ENCODE measurements at regions of chr17 and their contacts with region 1.

Region 1: GRCh38 chr17:32529604-32530003 is 42.8 kb downstream of the CDK5R1 start:
- DNase-seq: no peak
- ATAC-seq: no peak
- H3K4me3 ChIP-seq: no peak overlapping the region
- H3K4me3 Mint-ChIP-seq: no peak overlapping the region
- H3K27ac ChIP-seq: no peak overlapping the region
- H3K27ac Mint-ChIP-seq: no peak overlapping the region
- H3K4me1 ChIP-seq: peaks cover 16 to 31% of the 10 kb centered on the region in 2 donors
- H3K4me1 Mint-ChIP-seq: peaks cover 34% of the 10 kb centered on the region
- H3K27me3 ChIP-seq: no peaks in the 10 kb centered on the region
- H3K27me3 Mint-ChIP-seq: no peaks in the 10 kb centered on the region
- CTCF ChIP-seq: no peak

Region 2: GRCh38 chr17:32546031-32546444 is 16.4 kb after region 1 on chr17:
- CTCF ChIA-PET with region 1: no interaction called
- POLR2A ChIA-PET with region 1: no interaction called
- intact Hi-C with region 1: no loop called
- DNase-seq: no peak
- ATAC-seq: no peak
- H3K4me3 ChIP-seq: no peak overlapping the region
- H3K4me3 Mint-ChIP-seq: no peak overlapping the region
- H3K27ac ChIP-seq: no peak overlapping the region
- H3K27ac Mint-ChIP-seq: no peak overlapping the region
- H3K4me1 ChIP-seq: peaks cover 2% of the 10 kb centered on the region in 2 donors
- H3K4me1 Mint-ChIP-seq: peaks cover 2% of the 10 kb centered on the region
- H3K27me3 ChIP-seq: no peaks in the 10 kb centered on the region
- H3K27me3 Mint-ChIP-seq: no peaks in the 10 kb centered on the region
- CTCF ChIP-seq: no peak

Region 3: DNA sequence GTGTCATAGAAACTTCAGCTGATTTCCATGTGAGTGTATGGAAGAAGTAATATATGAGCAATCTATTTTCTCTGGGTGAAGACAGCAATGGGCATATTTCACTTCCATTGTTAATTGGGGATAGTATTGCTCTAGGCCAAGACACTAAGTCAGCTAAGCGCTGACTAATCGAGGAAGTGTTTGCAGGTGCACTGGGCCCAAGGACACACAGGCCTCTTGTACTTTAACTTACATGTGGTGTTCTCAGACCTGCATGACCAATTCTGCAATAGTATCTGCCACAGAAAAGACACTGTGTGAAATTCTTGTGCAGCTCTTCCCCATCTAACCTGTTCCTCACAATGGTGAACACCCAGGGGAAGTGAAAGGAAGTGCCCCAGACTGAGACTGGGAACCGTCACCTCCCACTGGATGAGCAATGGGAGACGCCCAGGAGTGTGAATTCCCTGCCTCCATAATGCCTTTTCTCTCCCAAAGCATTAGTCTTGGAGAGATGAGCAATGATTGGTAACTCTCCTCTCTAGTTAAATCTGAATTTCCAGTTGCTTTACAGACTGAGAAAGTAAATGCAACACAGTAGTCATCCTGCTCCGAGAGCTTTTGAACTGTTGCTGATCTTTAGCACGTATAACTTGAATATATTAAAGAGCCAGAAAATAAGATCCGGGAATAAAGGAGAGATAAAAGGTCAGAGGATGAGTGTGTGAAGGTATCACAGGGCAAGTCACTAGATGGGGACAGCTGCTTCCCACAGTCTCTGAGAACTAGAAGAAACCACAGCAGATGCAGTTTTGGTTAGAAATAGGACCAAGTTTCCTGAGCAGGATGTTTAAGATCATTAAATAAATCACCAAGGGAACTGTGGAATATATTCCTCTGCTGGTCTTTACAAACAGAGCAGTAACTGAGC is 39.8 kb after region 1 on chr17:
- CTCF ChIA-PET with region 1: no interaction called
- POLR2A ChIA-PET with region 1: no interaction called
- intact Hi-C with region 1: loop called (anchors 5 kb)
- DNase-seq: no peak
- ATAC-seq: no peak
- H3K4me3 ChIP-seq: no peak overlapping the region
- H3K4me3 Mint-ChIP-seq: no peak overlapping the region
- H3K27ac ChIP-seq: peak overlapping the region in 1 of 2 donors; percentile 43
- H3K27ac Mint-ChIP-seq: peak overlapping the region; percentile 44
- H3K4me1 ChIP-seq: peaks cover 14 to 17% of the 10 kb centered on the region in 2 donors
- H3K4me1 Mint-ChIP-seq: peaks cover 17% of the 10 kb centered on the region
- H3K27me3 ChIP-seq: no peaks in the 10 kb centered on the region
- H3K27me3 Mint-ChIP-seq: no peaks in the 10 kb centered on the region
- CTCF ChIP-seq: no peak